CD8-positive, alpha-beta T cell (primary cell): ENCODE measurements at regions of chr16 and their contacts with region 1.

Region 1: DNA sequence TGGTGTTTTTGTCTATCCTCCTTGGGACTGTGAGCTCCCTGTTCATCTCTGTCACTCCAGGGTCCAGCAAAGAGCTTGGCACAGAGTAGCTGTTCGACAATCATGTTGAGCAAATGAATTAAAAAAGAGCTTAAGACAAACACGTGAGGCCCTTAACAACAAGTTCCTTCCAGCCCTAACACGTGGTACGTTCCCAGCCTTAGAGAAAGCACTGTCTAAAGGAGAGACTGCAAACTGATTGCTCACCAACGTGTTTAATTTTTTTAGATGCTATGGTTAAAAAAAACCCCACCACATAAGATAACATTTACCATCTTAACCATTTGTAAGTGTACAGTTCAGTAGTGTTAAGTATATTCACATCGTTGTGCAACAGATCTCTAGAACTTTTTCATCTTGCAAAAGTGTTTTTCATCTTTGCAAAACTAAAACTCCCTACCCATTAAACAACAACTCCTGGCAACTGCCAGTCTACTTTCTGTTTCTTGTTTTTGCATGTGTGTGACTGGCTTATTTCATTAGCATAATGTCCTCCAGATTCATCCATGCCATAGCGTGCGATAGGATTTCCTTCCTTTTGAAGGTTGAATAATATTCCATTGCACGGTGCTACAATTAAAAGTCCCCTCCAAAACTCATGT is 28.2 kb downstream of the LAT start:
- DNase-seq: peak in 5 of 9 experiments; percentile 48 to 85 (median 66)
- ATAC-seq: peak; percentile 70
- H3K4me3 ChIP-seq: no peak overlapping the region
- H3K4me3 Mint-ChIP-seq: peak overlapping the region; percentile 33
- H3K27ac ChIP-seq: peak overlapping the region in 1 of 2 experiments; percentile 56
- H3K27ac Mint-ChIP-seq: peak overlapping the region; percentile 95
- H3K4me1 ChIP-seq: peaks cover 60% of the 10 kb centered on the region
- H3K4me1 Mint-ChIP-seq: peaks cover 51% of the 10 kb centered on the region
- H3K27me3 ChIP-seq: no peaks in the 10 kb centered on the region
- H3K27me3 Mint-ChIP-seq: no peaks in the 10 kb centered on the region
- CTCF ChIP-seq: no peak

Region 2: DNA sequence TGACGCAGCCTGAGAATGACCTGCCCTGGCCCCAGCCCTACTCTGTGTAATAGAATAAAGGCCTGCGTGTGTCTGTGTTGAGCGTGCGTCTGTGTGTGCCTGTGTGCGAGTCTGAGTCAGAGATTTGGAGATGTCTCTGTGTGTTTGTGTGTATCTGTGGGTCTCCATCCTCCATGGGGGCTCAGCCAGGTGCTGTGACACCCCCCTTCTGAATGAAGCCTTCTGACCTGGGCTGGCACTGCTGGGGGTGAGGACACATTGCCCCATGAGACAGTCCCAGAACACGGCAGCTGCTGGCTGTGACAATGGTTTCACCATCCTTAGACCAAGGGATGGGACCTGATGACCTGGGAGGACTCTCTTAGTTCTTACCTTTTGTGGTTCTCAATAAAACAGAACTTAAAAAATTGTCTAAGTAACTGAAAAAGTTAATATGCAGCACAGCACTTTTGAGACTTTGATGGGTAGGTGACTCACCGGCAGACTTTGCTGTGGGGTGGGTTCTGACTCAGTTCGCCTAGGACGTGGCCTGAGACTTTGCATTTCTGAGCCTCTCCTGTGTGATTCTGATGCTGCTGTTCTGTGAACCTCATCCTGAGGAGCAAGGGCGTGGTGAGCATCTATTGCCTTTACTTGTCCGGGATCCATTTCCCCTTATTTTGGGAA is 22.5 kb before region 1 on chr16:
- CTCF ChIA-PET with region 1: interaction called, 7 read pairs
- POLR2A ChIA-PET with region 1: interaction called, 52 read pairs
- intact Hi-C with region 1: loop called (anchors 1 kb)
- DNase-seq: peak in 7 of 9 experiments; percentile 45 to 74 (median 68)
- ATAC-seq: peak; percentile 55
- H3K4me3 ChIP-seq: peak overlapping the region in 1 of 2 experiments; percentile 26
- H3K4me3 Mint-ChIP-seq: peak overlapping the region; percentile 99
- H3K27ac ChIP-seq: peak overlapping the region; percentile 50 to 71
- H3K27ac Mint-ChIP-seq: peak overlapping the region; percentile 95
- H3K4me1 ChIP-seq: peaks cover 49% of the 10 kb centered on the region
- H3K4me1 Mint-ChIP-seq: peaks cover 51% of the 10 kb centered on the region
- H3K27me3 ChIP-seq: no peaks in the 10 kb centered on the region
- H3K27me3 Mint-ChIP-seq: no peaks in the 10 kb centered on the region
- CTCF ChIP-seq: no peak

Region 3: DNA sequence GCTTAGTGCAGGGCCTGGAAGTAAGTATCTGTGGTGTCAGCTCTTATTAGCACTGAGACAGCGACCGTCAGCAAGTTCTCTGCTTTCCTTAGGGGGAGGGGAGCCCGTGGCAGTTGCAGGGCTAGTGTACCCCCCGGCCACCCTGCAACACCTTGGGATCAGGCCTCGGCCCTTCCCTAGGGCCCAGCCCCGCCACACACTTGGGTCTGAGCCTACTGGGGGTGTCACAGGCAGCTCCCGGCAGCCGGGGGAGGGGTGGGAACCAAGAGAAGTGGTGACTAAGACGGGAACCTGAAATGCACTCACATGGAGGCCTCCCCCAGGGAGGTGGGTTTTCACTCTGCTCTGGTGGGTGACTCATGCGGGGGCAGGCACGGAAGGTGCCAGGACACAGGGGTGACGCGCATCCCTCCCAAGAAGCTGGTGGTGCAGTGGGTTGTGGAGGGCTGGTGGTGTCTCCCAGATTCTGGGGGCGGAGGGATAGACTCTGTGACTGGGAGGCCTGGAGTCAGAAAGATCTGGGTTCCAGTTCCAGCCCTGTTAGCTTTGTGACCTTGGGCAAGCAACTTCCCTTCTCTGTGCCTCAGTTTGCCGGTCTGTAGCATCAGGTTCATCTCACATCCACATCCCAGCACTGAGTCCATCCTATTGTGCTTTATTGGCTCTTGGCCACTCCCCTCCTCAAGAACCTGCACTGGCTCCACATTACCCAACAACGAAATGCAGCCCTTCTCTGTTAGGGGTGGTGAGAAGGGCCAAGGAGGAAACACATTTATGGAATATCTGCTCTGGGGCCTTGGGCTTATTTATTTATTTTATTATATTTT is 16.3 kb after region 1 on chr16:
- CTCF ChIA-PET with region 1: interaction called, 5 read pairs
- POLR2A ChIA-PET with region 1: interaction called, 5 read pairs
- intact Hi-C with region 1: loop called (anchors 1 to 2 kb)
- DNase-seq: peak in 8 of 9 experiments; percentile 58 to 88 (median 78)
- ATAC-seq: peak; percentile 98
- H3K4me3 ChIP-seq: peak overlapping the region in 1 of 2 experiments; percentile 35
- H3K4me3 Mint-ChIP-seq: no peak overlapping the region
- H3K27ac ChIP-seq: no peak overlapping the region
- H3K27ac Mint-ChIP-seq: peak overlapping the region; percentile 66
- H3K4me1 ChIP-seq: peaks cover 33% of the 10 kb centered on the region
- H3K4me1 Mint-ChIP-seq: peaks cover 44% of the 10 kb centered on the region
- H3K27me3 ChIP-seq: no peaks in the 10 kb centered on the region
- H3K27me3 Mint-ChIP-seq: no peaks in the 10 kb centered on the region
- CTCF ChIP-seq: no peak